Activated CD4-positive, alpha-beta T cell treated with anti-CD3 and anti-CD28 coated beads for 36 hours (primary cell): ENCODE measurements at regions of chr12 and their contacts with region 1.

Region 1: DNA sequence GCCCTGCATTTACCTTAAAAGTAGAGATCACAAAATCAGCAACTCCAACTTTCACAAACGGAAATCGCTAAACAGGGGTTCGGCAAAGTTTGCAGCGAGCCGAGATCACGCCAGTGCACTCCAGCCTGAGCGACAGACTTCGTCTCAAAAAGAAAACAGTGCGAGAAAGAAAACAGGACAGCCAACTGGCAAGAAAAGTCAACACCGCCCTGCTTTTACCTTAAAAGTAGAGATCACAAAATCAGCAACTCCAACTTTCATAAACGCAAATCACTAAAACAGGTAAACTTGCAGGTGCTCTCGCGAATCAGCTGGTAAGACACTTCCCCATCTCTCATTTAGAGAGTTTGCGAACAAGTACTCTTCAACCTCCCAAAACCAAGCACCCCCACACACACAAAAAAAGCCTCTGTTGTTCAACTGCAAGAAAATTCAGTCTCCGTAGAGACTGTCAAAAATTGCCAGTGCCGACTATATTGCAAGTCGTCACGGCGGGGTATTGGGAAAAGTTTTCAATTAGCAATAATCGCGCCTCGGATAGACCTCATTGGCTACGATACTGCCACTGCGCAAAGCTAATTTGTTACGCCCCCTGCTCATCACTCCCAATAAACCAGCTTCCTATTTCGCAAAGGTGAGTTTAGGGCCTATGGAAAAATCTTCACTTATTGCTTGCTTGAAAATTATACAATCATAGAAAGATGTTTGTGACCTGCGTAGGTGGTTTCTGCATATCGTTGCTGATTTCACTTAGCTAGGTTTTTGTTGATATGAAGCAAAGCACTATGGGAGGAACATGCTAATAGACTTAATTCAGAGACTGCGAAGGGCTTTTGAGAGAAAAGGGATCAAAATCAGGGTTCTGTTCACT is at the start of gene RNU4-1:
- DNase-seq: peak; percentile 88
- ATAC-seq: peak; percentile 69
- H3K4me3 Mint-ChIP-seq: no peak within 1 kb of the TSS
- H3K27ac Mint-ChIP-seq: no peak within 1 kb of the TSS
- H3K4me1 Mint-ChIP-seq: peaks cover 7% of the 10 kb centered on the region
- H3K27me3 Mint-ChIP-seq: no peaks in the 10 kb centered on the region
- total RNA-seq, gene RNU4-1: 323 to 1,150 TPM

Region 2: DNA sequence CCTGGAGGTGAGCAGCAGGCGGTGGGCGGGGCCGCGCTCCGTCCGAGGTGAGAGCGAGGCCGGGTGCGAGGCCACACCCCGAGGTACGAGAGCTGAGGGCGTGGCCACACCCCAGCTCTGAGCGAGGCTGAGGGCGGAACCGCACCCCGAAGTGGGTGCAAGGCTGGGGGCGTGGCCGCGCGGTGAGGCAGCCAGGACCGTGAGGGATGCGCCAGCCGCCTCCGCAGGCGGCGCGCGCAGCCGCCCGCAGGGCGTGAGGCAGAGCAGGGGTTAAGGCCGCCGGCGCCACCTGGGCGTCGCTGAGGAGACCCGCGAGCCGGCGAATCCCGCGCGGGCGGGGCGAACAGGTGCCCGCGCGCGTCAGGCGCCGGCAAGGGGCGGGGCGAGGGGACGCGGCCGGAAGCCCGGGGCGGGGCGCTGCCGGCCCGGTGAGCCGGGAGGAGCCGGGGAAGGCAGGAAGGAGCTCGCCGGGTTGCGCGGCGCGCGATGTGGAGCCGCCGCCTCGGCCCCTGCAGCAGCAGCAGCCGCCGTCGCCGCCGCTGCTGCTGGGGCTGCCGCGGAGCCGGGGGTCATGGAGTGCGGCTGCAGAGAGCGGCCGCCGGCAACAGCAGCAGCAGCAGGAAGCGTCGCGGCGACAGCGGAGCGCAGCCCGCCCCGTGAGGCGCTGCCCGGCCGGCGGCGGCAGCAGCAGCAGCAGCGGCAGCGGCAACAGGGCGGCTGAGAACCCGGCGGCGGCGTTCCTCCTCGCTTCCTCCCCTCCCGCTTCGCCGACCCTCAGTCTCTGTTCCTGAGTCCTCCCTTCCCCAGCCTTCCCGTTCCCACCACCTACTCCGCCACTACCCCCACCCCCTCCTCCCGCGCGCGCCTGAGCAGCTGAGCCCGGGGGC is 303.9 kb before region 1 on chr12 and contains the start of gene BICDL1:
- CTCF ChIA-PET with region 1: no interaction called
- POLR2A ChIA-PET with region 1: interaction called, 15 read pairs
- intact Hi-C with region 1: loop called in 1 of 2 experiments (anchors 2 kb)
- DNase-seq: peak; percentile 99
- ATAC-seq: peak; percentile 87
- H3K4me3 Mint-ChIP-seq: peak within 1 kb of the TSS; percentile 90
- H3K27ac Mint-ChIP-seq: peak within 1 kb of the TSS; percentile 92
- H3K4me1 Mint-ChIP-seq: peaks cover 46% of the 10 kb centered on the region
- H3K27me3 Mint-ChIP-seq: no peaks in the 10 kb centered on the region
- total RNA-seq, gene BICDL1: 106 to 132 TPM

Region 3: DNA sequence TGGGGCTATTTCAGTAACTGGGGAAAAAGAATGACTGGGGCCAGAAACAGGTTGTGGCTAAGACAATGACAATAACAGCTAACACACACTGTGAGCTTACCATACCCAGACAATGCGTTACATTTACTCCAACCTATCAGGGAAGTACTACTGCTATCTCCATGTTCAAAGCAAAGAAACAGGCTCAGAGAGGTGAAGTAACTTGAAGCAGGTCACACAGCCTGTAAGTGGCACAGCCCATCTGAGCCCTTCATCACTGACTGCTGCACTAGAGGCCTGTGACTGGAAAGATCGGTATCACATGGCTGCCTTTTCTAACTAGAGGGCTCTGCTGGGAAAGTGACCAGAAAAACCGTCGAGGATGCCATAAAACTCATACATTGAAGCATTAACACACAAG is 106.2 kb before region 1 on chr12:
- CTCF ChIA-PET with region 1: no interaction called
- POLR2A ChIA-PET with region 1: interaction called, 13 read pairs
- intact Hi-C with region 1: no loop called
- DNase-seq: no peak
- ATAC-seq: no peak
- H3K4me3 Mint-ChIP-seq: no peak overlapping the region
- H3K27ac Mint-ChIP-seq: peak overlapping the region; percentile 23
- H3K4me1 Mint-ChIP-seq: peaks cover 12% of the 10 kb centered on the region
- H3K27me3 Mint-ChIP-seq: no peaks in the 10 kb centered on the region

Region 4: DNA sequence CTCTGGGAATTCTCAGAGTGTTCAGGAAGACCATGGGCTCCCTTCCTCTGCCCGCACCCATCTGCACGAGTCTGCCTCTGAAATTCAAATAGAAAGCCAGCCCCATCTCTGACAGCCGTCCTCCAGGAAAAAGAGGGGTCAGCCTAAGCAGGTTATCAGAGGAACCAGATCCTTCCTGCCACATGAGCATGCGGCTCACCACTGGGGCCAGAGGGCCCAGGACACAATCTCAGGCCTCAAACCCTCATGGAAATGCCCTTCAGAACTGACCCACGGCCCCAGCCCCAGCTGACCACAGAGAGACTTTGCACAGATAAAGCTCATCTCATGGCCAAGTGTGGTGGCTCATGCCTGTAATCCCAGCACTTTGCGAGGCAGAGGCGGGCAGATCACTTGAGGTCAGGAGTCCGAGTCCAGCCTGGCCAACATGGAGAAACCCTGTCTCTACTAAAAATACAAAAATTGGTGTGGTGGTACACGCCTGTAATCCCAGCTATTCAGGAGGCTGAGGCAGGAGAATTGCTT is 50.6 kb before region 1 on chr12:
- CTCF ChIA-PET with region 1: no interaction called
- POLR2A ChIA-PET with region 1: interaction called, 47 read pairs
- intact Hi-C with region 1: no loop called
- DNase-seq: no peak
- ATAC-seq: no peak
- H3K4me3 Mint-ChIP-seq: no peak overlapping the region
- H3K27ac Mint-ChIP-seq: no peak overlapping the region
- H3K4me1 Mint-ChIP-seq: peaks cover 67% of the 10 kb centered on the region
- H3K27me3 Mint-ChIP-seq: no peaks in the 10 kb centered on the region

Region 5: GRCh38 chr12:120317224-120318105 is 24.6 kb after region 1 on chr12:
- CTCF ChIA-PET with region 1: interaction called, 4 read pairs
- POLR2A ChIA-PET with region 1: interaction called, 17 read pairs
- intact Hi-C with region 1: loop called (anchors 1 kb)
- DNase-seq: peak; percentile 100
- ATAC-seq: peak; percentile 100
- H3K4me3 Mint-ChIP-seq: peak overlapping the region; percentile 92
- H3K27ac Mint-ChIP-seq: peak overlapping the region; percentile 94
- H3K4me1 Mint-ChIP-seq: peaks cover 12% of the 10 kb centered on the region
- H3K27me3 Mint-ChIP-seq: no peaks in the 10 kb centered on the region

Region 6: GRCh38 chr12:120495723-120496412 is 203.0 kb after region 1 on chr12 and contains the start of gene DYNLL1:
- CTCF ChIA-PET with region 1: no interaction called
- POLR2A ChIA-PET with region 1: interaction called, 16 read pairs
- intact Hi-C with region 1: no loop called
- DNase-seq: peak; percentile 98
- ATAC-seq: peak; percentile 98
- H3K4me3 Mint-ChIP-seq: peak within 1 kb of the TSS; percentile 91
- H3K27ac Mint-ChIP-seq: peak within 1 kb of the TSS; percentile 75
- H3K4me1 Mint-ChIP-seq: peaks cover 31% of the 10 kb centered on the region
- H3K27me3 Mint-ChIP-seq: no peaks in the 10 kb centered on the region
- total RNA-seq, gene DYNLL1: 166 to 169 TPM

Region 7: GRCh38 chr12:120514002-120514401 is 221.1 kb after region 1 on chr12:
- CTCF ChIA-PET with region 1: no interaction called
- POLR2A ChIA-PET with region 1: no interaction called
- intact Hi-C with region 1: no loop called
- DNase-seq: no peak
- ATAC-seq: no peak
- H3K4me3 Mint-ChIP-seq: no peak overlapping the region
- H3K27ac Mint-ChIP-seq: no peak overlapping the region
- H3K4me1 Mint-ChIP-seq: no peaks in the 10 kb centered on the region
- H3K27me3 Mint-ChIP-seq: no peaks in the 10 kb centered on the region